Naive thymus-derived CD4-positive, alpha-beta T cell (primary cell): ENCODE measurements at regions of chr4 and their contacts with region 1.

Region 1: GRCh38 chr4:16026160-16026761 is 57.6 kb downstream of the PROM1 start:
- DNase-seq: peak in 7 of 9 donors; percentile 21 to 64 (median 56)
- ATAC-seq: peak; percentile 34
- H3K4me3 ChIP-seq: no peak overlapping the region
- H3K4me3 Mint-ChIP-seq: no peak overlapping the region
- H3K27ac ChIP-seq: no peak overlapping the region
- H3K27ac Mint-ChIP-seq: no peak overlapping the region
- H3K4me1 ChIP-seq: no peaks in the 10 kb centered on the region
- H3K4me1 Mint-ChIP-seq: no peaks in the 10 kb centered on the region
- H3K27me3 ChIP-seq: peaks cover 0 to 4% of the 10 kb centered on the region in 2 donors
- H3K27me3 Mint-ChIP-seq: peaks cover 0 to 26% (median 14%) of the 10 kb centered on the region in 5 donors

Region 2: GRCh38 chr4:16196478-16197393 is 170.5 kb after region 1 on chr4:
- CTCF ChIA-PET with region 1: interaction called, 3 read pairs
- POLR2A ChIA-PET with region 1: no interaction called
- intact Hi-C with region 1: loop called (anchors 1 kb)
- DNase-seq: peak in 6 of 9 donors; percentile 8 to 28 (median 20)
- ATAC-seq: peak; percentile 78
- H3K4me3 ChIP-seq: no peak overlapping the region
- H3K4me3 Mint-ChIP-seq: peak overlapping the region in 9 of 10 donors; percentile 0 to 67 (median 28)
- H3K27ac ChIP-seq: no peak overlapping the region
- H3K27ac Mint-ChIP-seq: peak overlapping the region in 7 of 9 donors; percentile 2 to 86 (median 32)
- H3K4me1 ChIP-seq: no peaks in the 10 kb centered on the region
- H3K4me1 Mint-ChIP-seq: peaks cover 14 to 50% (median 34%) of the 10 kb centered on the region in 7 donors
- H3K27me3 ChIP-seq: no peaks in the 10 kb centered on the region
- H3K27me3 Mint-ChIP-seq: no peaks in the 10 kb centered on the region

Region 3: GRCh38 chr4:16289897-16290554 is 263.8 kb after region 1 on chr4:
- CTCF ChIA-PET with region 1: interaction called, 3 read pairs
- POLR2A ChIA-PET with region 1: no interaction called
- intact Hi-C with region 1: loop called in 1 of 2 experiments (anchors 1 kb)
- DNase-seq: peak in 5 of 9 donors; percentile 8 to 21 (median 19)
- ATAC-seq: peak; percentile 45
- H3K4me3 ChIP-seq: no peak overlapping the region
- H3K4me3 Mint-ChIP-seq: peak overlapping the region in 7 of 10 donors; percentile 7 to 69 (median 12)
- H3K27ac ChIP-seq: no peak overlapping the region
- H3K27ac Mint-ChIP-seq: no peak overlapping the region
- H3K4me1 ChIP-seq: no peaks in the 10 kb centered on the region
- H3K4me1 Mint-ChIP-seq: peaks cover 0 to 5% (median 4%) of the 10 kb centered on the region in 7 donors
- H3K27me3 ChIP-seq: no peaks in the 10 kb centered on the region
- H3K27me3 Mint-ChIP-seq: peaks cover 5 to 37% (median 17%) of the 10 kb centered on the region in 5 donors

Region 4: DNA sequence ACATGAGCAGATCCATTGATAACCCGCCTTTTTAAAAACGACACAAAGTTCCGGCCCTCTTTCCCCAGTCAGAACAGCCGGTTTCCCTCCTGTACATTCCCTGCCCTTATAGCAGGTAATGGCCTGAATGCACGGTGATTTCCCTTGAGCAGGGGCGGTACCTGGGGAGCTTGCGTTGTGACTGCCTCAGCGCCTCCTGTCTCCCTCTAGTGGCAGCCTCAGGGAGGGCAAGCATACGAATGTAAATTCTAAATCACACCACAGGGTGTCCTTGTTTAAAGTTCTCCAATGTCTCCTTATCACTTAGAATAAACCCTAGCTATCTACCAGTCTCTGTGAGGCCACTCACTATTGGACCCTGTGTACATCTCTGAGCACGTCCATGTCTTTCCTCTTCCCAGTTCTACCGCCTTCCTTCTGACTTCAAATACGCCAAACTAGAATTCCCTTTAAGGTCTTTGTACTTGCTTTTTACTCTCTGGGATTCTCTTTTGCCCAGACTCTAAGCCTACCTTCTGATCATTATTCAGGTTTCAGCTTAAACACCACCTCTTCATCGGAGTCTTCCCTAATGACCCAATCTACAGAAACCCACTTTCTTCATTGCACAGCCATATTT is 890.6 kb after region 1 on chr4:
- CTCF ChIA-PET with region 1: no interaction called
- POLR2A ChIA-PET with region 1: no interaction called
- intact Hi-C with region 1: loop called (anchors 5 kb)
- DNase-seq: peak; percentile 24 to 77 (median 58)
- ATAC-seq: peak; percentile 95
- H3K4me3 ChIP-seq: no peak overlapping the region
- H3K4me3 Mint-ChIP-seq: no peak overlapping the region
- H3K27ac ChIP-seq: no peak overlapping the region
- H3K27ac Mint-ChIP-seq: no peak overlapping the region
- H3K4me1 ChIP-seq: no peaks in the 10 kb centered on the region
- H3K4me1 Mint-ChIP-seq: peaks cover 0 to 4% (median 0%) of the 10 kb centered on the region in 7 donors
- H3K27me3 ChIP-seq: no peaks in the 10 kb centered on the region
- H3K27me3 Mint-ChIP-seq: peaks cover 0 to 4% (median 0%) of the 10 kb centered on the region in 5 donors

Region 5: DNA sequence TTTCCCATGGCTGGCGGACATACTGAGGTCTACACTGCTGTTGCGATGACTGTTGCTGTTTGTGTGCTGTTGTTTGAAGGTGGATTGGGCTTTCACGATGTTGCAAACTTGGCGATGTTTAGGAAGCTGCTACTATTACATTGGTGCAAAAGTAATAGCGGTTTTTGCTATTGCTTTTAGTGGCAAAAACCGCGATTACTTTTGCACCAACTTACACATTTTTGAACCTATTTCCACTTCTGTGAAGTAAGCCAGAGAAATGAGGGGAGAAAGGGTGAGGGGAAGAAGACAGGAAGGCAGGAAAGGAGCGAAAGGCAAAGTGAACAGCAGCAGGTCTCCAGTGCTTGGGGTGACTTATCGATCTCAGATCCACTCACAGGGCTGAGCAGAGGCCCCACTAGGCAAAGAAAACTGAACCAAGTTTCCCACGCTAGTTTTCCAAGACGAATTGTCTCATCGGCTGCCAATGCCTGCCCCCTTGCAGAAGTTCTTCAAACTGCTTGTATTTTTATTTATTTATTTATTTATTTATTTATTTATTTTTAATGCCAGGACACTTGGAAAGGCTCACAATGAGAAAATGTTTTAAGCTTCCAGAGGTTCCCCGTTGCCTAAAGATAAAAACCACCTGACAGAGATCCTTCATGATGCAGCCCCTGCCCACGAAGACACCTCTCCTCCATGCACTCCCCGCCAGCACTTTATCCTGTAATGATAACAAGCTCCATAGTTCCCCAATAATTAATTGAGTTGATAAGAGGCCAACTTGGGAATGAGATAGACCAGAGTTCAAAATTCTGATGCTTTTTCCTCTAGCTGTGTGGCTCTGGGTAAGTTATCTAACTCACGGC is 1442.3 kb after region 1 on chr4:
- CTCF ChIA-PET with region 1: no interaction called
- POLR2A ChIA-PET with region 1: no interaction called
- intact Hi-C with region 1: loop called in 1 of 2 experiments (anchors 2 kb)
- DNase-seq: no peak
- ATAC-seq: no peak
- H3K4me3 ChIP-seq: no peak overlapping the region
- H3K4me3 Mint-ChIP-seq: no peak overlapping the region
- H3K27ac ChIP-seq: no peak overlapping the region
- H3K27ac Mint-ChIP-seq: no peak overlapping the region
- H3K4me1 ChIP-seq: no peaks in the 10 kb centered on the region
- H3K4me1 Mint-ChIP-seq: peaks cover 0 to 3% (median 0%) of the 10 kb centered on the region in 7 donors
- H3K27me3 ChIP-seq: no peaks in the 10 kb centered on the region
- H3K27me3 Mint-ChIP-seq: no peaks in the 10 kb centered on the region